ENCODE measurements at regions of chr12 and their contacts with region 1.

Region 1: DNA sequence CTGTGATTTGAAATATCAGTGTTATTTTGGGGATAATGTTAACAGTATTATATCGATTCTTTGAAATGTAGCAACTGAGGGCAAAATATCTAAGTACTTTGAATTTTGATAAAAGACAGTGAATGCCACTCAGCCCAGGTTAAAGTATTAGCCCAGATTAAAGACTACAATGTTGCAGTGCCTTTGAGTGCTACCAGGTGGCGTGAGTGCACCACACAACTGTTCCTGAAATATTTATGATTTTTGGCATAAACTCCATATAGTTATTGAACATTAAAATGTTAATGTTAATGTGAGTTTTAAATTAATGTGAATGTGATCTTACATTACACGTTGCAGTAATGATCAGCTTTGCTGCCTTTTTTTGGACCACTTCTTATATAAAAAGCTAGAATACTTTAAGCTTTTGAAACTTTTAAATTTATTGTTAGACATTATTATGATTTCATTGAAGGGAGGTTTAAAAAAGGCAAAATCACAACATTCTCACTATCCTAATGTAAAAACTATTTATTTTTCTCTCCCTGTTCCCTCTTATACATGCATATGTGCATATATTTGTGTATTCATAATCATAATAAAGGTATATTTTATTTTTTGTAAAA is 22.5 kb downstream of the MRPS35 start:
- DNase-seq: peak; percentile 36
- H3K4me3 Mint-ChIP-seq: no peak overlapping the region
- H3K27ac Mint-ChIP-seq: no peak overlapping the region
- H3K4me1 Mint-ChIP-seq: no peaks in the 10 kb centered on the region
- H3K27me3 Mint-ChIP-seq: no peaks in the 10 kb centered on the region
- CTCF ChIP-seq: peak; percentile 64

Region 2: GRCh38 chr12:27821259-27821973 is 88.3 kb after region 1 on chr12:
- CTCF ChIA-PET with region 1: no interaction called
- intact Hi-C with region 1: loop called (anchors 2 kb)
- DNase-seq: peak; percentile 70
- H3K4me3 Mint-ChIP-seq: no peak overlapping the region
- H3K27ac Mint-ChIP-seq: no peak overlapping the region
- H3K4me1 Mint-ChIP-seq: peaks cover 7% of the 10 kb centered on the region
- H3K27me3 Mint-ChIP-seq: no peaks in the 10 kb centered on the region
- CTCF ChIP-seq: peak; percentile 75

Region 3: DNA sequence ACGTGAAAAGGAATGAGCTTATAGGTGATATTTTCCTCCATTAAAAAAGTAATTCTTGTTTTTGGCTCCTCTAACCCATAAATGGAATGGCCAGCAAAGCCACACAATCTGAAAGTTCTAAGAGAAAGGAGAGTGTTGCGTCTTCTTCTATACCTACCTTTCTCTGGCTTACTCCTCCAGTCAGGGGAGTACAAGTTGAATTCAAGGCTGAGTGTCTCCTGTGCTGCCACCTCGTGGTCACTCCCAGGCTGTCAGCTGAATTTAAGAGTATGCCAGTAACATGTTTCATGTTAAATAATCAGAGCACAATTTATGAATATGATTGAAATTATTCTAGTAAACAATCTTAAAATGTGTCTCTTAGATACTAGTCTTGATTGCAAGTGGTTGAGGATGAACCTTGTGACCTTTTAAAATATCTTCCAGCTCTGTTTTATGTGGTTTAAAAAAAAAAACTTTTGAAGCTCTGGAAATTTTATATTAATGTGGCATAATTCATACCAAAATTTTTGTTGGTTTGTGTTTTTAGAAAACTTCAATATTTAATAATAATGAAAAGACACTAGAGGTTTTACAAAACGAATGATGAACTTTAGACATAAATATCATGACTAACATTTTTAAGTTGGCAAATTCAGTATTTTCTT is 207.7 kb after region 1 on chr12:
- CTCF ChIA-PET with region 1: no interaction called
- intact Hi-C with region 1: loop called (anchors 1 kb)
- DNase-seq: peak; percentile 81
- H3K4me3 Mint-ChIP-seq: no peak overlapping the region
- H3K27ac Mint-ChIP-seq: no peak overlapping the region
- H3K4me1 Mint-ChIP-seq: no peaks in the 10 kb centered on the region
- H3K27me3 Mint-ChIP-seq: no peaks in the 10 kb centered on the region
- CTCF ChIP-seq: peak; percentile 66

Region 4: GRCh38 chr12:28110329-28110728 is 377.2 kb after region 1 on chr12:
- CTCF ChIA-PET with region 1: no interaction called
- intact Hi-C with region 1: no loop called
- DNase-seq: no peak
- H3K4me3 Mint-ChIP-seq: no peak overlapping the region
- H3K27ac Mint-ChIP-seq: no peak overlapping the region
- H3K4me1 Mint-ChIP-seq: peaks cover 10% of the 10 kb centered on the region
- H3K27me3 Mint-ChIP-seq: no peaks in the 10 kb centered on the region
- CTCF ChIP-seq: no peak

Region 5: DNA sequence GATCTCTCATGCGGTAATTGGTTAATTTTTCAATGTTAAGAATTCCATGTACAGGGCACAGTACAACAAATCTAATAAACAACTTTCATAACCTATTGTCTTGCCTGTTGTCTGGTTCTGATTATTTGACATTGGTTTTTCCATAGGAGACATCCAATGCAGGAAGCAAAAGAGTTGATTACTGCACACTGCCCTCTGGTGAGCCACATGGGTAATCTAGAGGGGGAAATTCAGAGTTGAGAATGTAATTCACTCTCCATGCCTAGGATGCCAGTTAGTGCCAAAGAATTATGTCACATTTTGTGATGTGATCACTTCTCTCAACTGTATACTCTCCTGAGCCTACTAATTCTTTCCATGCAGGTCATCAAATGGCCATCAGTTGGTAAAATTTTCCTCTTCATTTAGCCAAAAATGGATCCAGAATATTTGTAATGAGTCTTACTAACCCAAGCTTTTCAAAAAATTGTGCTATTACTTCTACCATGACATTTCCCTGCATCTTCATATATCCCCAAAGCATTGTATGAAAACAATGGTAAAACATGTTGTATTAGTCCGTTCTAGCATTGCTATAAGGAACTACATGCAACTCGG is 439.4 kb after region 1 on chr12:
- CTCF ChIA-PET with region 1: no interaction called
- intact Hi-C with region 1: loop called (anchors 5 kb)
- DNase-seq: peak; percentile 43
- H3K4me3 Mint-ChIP-seq: no peak overlapping the region
- H3K27ac Mint-ChIP-seq: no peak overlapping the region
- H3K4me1 Mint-ChIP-seq: no peaks in the 10 kb centered on the region
- H3K27me3 Mint-ChIP-seq: no peaks in the 10 kb centered on the region
- CTCF ChIP-seq: peak; percentile 31

Region 6: GRCh38 chr12:28879379-28879778 is 1146.2 kb after region 1 on chr12:
- CTCF ChIA-PET with region 1: no interaction called
- intact Hi-C with region 1: loop called (anchors 5 kb)
- DNase-seq: no peak
- H3K4me3 Mint-ChIP-seq: no peak overlapping the region
- H3K27ac Mint-ChIP-seq: no peak overlapping the region
- H3K4me1 Mint-ChIP-seq: no peaks in the 10 kb centered on the region
- H3K27me3 Mint-ChIP-seq: peaks cover 13% of the 10 kb centered on the region
- CTCF ChIP-seq: no peak

Region 7: DNA sequence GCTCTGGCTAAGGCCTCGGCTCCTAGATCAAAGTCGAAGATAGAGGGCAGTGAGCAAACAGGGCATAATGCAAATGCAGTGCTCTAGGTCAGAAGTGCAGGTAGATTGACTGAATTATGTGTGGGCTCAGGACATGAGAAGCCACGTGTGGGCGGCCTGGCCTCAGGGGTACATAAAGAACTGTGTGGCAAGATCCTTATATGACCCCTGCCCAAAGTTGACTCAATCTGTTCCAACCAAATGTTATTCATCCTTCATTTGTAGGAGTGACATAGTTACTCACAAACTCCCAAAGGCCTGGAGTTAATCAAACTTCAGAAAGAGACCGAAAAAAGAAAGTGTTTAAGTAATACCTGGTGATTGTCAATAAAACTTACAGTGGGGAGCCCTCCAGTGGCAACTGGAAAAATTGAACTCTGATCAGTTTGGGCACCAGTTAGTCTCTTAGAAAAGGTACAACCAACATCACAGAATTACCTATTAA is 1265.5 kb after region 1 on chr12:
- CTCF ChIA-PET with region 1: no interaction called
- intact Hi-C with region 1: loop called (anchors 5 kb)
- DNase-seq: peak; percentile 31
- H3K4me3 Mint-ChIP-seq: no peak overlapping the region
- H3K27ac Mint-ChIP-seq: no peak overlapping the region
- H3K4me1 Mint-ChIP-seq: no peaks in the 10 kb centered on the region
- H3K27me3 Mint-ChIP-seq: no peaks in the 10 kb centered on the region
- CTCF ChIP-seq: peak; percentile 28